Panc1 (cell line): ENCODE measurements at regions of chr7 and their contacts with region 1.

Region 1: DNA sequence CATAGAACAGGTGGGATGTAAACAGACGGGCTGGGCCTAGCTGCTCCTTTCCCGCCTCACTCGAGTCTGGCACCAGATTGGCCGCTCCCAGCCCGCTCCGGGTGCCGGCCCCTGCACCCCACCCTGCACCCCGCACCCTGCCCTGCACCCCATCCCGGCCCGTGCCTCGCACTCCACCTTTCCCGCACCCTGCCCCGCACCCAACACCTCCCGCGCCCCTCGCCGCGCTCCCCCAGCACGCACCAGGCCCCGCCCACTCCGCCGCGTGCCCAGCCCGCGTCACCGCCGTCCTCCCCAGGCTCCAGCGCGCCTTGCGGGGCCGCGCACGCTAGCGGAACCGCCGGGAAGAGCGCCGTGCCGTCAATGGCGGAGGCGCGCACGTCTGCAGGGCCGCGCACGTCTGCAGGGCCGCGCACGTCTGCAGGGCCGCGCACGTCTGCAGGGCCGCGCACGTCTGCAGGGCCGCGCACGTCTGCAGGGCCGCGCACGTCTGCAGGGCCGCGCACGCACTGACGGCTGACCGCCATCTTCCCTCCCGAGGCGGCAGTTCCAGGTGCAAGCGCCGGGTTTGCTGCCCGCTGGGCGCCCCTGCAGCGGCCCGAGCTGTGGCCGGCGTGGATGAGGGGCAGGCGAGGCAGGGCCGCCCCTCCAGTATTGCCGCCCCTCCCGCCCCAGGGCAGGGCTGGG is at the start of gene UBE3C:
- DNase-seq: peak; percentile 56
- ATAC-seq: peak; percentile 96
- H3K4me3 ChIP-seq: peak within 1 kb of the TSS; percentile 63 to 69
- H3K27ac ChIP-seq: peak within 1 kb of the TSS; percentile 84
- H3K4me1 ChIP-seq: peaks cover 18% of the 10 kb centered on the region
- H3K27me3 ChIP-seq: no peaks in the 10 kb centered on the region
- CTCF ChIP-seq: no peak
- total RNA-seq, gene UBE3C: 87.6 TPM

Region 2: DNA sequence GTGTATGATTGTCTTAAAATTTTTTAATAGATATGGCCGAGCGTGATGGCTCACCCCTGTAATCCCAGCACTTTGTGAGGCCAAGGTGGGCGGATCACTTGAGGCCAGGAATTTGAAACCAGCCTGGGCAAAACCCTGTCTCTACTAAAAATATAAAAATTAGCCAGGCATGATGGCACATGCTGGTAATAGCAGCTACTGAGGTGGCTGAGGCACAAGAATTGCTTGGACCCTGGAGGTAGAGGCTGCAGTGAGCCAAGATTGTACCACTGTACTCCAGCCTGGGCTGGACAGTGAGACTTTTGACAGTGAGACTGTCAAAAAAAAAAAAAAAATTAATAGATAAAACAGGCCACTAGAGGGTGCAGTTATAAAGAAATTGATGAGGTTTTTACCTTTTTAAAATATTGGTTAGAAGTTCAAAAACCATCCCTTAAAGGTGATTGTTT is 168.6 kb before region 1 on chr7:
- CTCF ChIA-PET with region 1: interaction called, 4 read pairs
- POLR2A ChIA-PET with region 1: no interaction called
- in situ Hi-C with region 1: no loop called
- intact Hi-C with region 1: loop called (anchors 10 kb)
- DNase-seq: no peak
- ATAC-seq: peak; percentile 72
- H3K4me3 ChIP-seq: no peak overlapping the region
- H3K27ac ChIP-seq: no peak overlapping the region
- H3K4me1 ChIP-seq: no peaks in the 10 kb centered on the region
- H3K27me3 ChIP-seq: no peaks in the 10 kb centered on the region
- CTCF ChIP-seq: no peak; the same call in 1 of the 2 replicates

Region 3: GRCh38 chr7:157195868-157196267 is 57.3 kb after region 1 on chr7:
- CTCF ChIA-PET with region 1: interaction called, 11 read pairs
- POLR2A ChIA-PET with region 1: no interaction called
- in situ Hi-C with region 1: no loop called
- intact Hi-C with region 1: no loop called
- DNase-seq: no peak
- ATAC-seq: no peak
- H3K4me3 ChIP-seq: no peak overlapping the region
- H3K27ac ChIP-seq: no peak overlapping the region
- H3K4me1 ChIP-seq: no peaks in the 10 kb centered on the region
- H3K27me3 ChIP-seq: no peaks in the 10 kb centered on the region
- CTCF ChIP-seq: no peak